ENCODE measurements at regions of chr12 and their contacts with region 1.

Region 1: DNA sequence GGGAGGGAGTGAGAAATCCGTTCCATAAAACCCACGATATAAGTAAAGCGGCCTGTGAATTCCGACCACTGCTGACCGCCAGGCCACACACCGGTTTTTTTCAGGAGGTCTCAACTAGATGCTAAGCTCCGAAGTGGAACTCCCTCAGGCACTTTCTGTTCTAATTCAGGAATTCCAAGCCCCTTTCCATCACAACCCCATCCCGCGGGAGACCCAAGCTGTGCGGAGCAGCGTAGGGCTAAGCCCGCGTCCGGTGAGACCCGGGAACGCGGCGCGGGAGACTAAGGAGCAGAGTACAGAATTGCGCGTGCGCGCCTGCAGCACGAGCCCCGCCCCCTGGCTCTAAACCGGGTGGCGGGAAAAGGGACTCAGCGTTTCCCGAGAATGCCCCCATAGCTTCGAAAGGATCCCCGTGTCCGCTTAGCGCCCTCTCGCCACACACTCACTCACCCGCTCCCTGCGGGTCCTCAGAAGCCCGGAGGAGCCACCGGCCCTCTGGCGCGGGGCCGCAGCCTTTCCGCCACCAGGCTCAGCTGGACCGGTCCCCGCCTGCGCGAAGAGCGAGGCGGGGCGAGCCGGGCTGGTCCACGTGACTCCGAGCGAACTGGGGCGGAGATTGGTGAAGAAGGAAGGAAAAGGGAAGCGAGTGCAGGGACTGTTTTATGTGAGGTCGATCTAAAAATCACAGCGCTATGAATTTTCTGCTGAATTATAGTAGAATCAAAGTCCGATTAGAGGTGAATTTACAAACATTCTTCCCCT is at the start of gene TIMELESS:
- DNase-seq: peak; percentile 85 to 90 (median 86)
- H3K4me3 ChIP-seq: peak within 1 kb of the TSS; percentile 96
- H3K4me3 Mint-ChIP-seq: peak within 1 kb of the TSS; percentile 90 to 95 (median 94)
- H3K27ac ChIP-seq: peak within 1 kb of the TSS; percentile 75
- H3K27ac Mint-ChIP-seq: peak within 1 kb of the TSS; percentile 75 to 98 (median 97)
- H3K4me1 ChIP-seq: peaks cover 7% of the 10 kb centered on the region
- H3K4me1 Mint-ChIP-seq: peaks cover 11 to 28% (median 16%) of the 10 kb centered on the region in 4 donors
- H3K27me3 ChIP-seq: no peaks in the 10 kb centered on the region
- H3K27me3 Mint-ChIP-seq: no peaks in the 10 kb centered on the region
- total RNA-seq, gene TIMELESS: 7.3 to 7.5 TPM

Region 2: GRCh38 chr12:56315622-56316473 is 133.2 kb before region 1 on chr12 and contains the start of gene CNPY2:
- CTCF ChIA-PET with region 1: interaction called, 3 read pairs
- POLR2A ChIA-PET with region 1: interaction called, 19 read pairs
- intact Hi-C with region 1: loop called (anchors 1 kb)
- DNase-seq: peak; percentile 93 to 97 (median 95)
- H3K4me3 ChIP-seq: peak within 1 kb of the TSS; percentile 99 to 100
- H3K4me3 Mint-ChIP-seq: peak within 1 kb of the TSS; percentile 97 to 100 (median 98)
- H3K27ac ChIP-seq: peak within 1 kb of the TSS; percentile 95
- H3K27ac Mint-ChIP-seq: peak within 1 kb of the TSS; percentile 98 to 100 (median 99)
- H3K4me1 ChIP-seq: peaks cover 18% of the 10 kb centered on the region
- H3K4me1 Mint-ChIP-seq: peaks cover 1 to 25% (median 13%) of the 10 kb centered on the region in 4 donors
- H3K27me3 ChIP-seq: no peaks in the 10 kb centered on the region
- H3K27me3 Mint-ChIP-seq: no peaks in the 10 kb centered on the region
- total RNA-seq, gene CNPY2: 93.5 to 95.8 TPM

Region 3: GRCh38 chr12:56341616-56342015 is 107.4 kb before region 1 on chr12:
- CTCF ChIA-PET with region 1: no interaction called
- POLR2A ChIA-PET with region 1: interaction called, 15 read pairs
- intact Hi-C with region 1: loop called (anchors 1 kb)
- DNase-seq: no peak
- H3K4me3 ChIP-seq: no peak overlapping the region
- H3K4me3 Mint-ChIP-seq: peak overlapping the region in 1 of 8 donors; percentile 35
- H3K27ac ChIP-seq: peak overlapping the region; percentile 29
- H3K27ac Mint-ChIP-seq: peak overlapping the region; percentile 39 to 96 (median 79)
- H3K4me1 ChIP-seq: peaks cover 42% of the 10 kb centered on the region
- H3K4me1 Mint-ChIP-seq: peaks cover 21 to 51% (median 33%) of the 10 kb centered on the region in 4 donors
- H3K27me3 ChIP-seq: no peaks in the 10 kb centered on the region
- H3K27me3 Mint-ChIP-seq: no peaks in the 10 kb centered on the region

Region 4: DNA sequence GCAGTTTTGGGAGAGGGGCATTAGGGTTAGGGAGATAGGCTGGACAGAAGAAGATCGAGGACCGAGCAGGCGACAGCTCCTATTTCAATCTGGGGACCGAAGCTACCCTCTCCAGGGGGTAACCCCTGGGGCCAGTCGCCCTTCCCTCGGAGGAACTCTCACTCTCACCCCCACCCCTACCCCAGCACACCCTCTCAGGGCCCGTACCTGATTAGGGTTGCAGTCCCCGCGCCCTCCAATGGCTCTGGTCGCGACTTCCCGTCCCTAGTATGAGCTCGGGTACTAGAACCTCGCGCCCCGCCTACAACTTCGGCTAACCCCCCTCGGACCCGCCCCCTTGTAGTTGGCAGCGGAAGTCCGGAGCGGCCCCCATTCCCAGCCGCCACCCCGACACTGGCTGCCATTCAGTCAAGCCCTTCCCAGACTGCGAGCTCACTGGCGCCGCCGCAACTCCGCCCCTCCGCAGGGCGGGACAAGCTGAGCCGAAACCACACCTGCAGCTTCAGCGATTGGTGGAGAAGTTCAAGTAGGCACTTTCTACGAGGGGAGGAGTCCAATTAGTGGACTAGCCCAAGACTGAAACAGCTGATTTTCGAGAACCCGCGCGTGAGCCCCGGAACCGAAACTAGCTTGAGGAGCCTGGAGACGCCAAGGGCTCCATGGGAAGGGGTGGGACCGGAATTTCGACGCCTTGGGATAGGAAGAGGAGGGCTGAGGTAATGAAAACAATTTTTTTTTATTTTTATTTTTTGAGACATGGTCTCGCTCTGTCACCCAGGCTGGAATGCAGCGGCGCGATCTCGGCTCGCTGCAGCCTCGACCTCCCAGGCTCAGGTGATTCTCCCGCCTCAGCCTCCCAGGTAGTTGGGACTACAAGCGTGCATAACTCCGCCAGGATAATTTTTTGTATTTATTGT is 88.9 kb before region 1 on chr12 and contains the start of gene STAT2:
- CTCF ChIA-PET with region 1: interaction called, 9 read pairs
- POLR2A ChIA-PET with region 1: interaction called, 31 read pairs
- intact Hi-C with region 1: loop called (anchors 1 kb)
- DNase-seq: peak; percentile 99 to 100 (median 100)
- H3K4me3 ChIP-seq: peak within 1 kb of the TSS; percentile 78 to 97
- H3K4me3 Mint-ChIP-seq: peak within 1 kb of the TSS; percentile 92 to 98 (median 96)
- H3K27ac ChIP-seq: peak within 1 kb of the TSS; percentile 84
- H3K27ac Mint-ChIP-seq: peak within 1 kb of the TSS; percentile 89 to 98 (median 96)
- H3K4me1 ChIP-seq: peaks cover 29% of the 10 kb centered on the region
- H3K4me1 Mint-ChIP-seq: peaks cover 16 to 30% (median 21%) of the 10 kb centered on the region in 4 donors
- H3K27me3 ChIP-seq: no peaks in the 10 kb centered on the region
- H3K27me3 Mint-ChIP-seq: no peaks in the 10 kb centered on the region
- total RNA-seq, gene STAT2: 192 to 193 TPM

Region 5: GRCh38 chr12:56437430-56438176 is 11.4 kb before region 1 on chr12:
- CTCF ChIA-PET with region 1: interaction called, 10 read pairs
- POLR2A ChIA-PET with region 1: no interaction called
- intact Hi-C with region 1: no loop called
- DNase-seq: no peak
- H3K4me3 ChIP-seq: no peak overlapping the region
- H3K4me3 Mint-ChIP-seq: no peak overlapping the region
- H3K27ac ChIP-seq: no peak overlapping the region
- H3K27ac Mint-ChIP-seq: peak overlapping the region in 3 of 7 donors; percentile 7 to 53 (median 38)
- H3K4me1 ChIP-seq: no peaks in the 10 kb centered on the region
- H3K4me1 Mint-ChIP-seq: no peaks in the 10 kb centered on the region
- H3K27me3 ChIP-seq: no peaks in the 10 kb centered on the region
- H3K27me3 Mint-ChIP-seq: no peaks in the 10 kb centered on the region

Measured in CD4-positive, alpha-beta memory T cell (primary cell).